ENCODE measurements at regions of chr12 and their contacts with region 1.

Region 1: DNA sequence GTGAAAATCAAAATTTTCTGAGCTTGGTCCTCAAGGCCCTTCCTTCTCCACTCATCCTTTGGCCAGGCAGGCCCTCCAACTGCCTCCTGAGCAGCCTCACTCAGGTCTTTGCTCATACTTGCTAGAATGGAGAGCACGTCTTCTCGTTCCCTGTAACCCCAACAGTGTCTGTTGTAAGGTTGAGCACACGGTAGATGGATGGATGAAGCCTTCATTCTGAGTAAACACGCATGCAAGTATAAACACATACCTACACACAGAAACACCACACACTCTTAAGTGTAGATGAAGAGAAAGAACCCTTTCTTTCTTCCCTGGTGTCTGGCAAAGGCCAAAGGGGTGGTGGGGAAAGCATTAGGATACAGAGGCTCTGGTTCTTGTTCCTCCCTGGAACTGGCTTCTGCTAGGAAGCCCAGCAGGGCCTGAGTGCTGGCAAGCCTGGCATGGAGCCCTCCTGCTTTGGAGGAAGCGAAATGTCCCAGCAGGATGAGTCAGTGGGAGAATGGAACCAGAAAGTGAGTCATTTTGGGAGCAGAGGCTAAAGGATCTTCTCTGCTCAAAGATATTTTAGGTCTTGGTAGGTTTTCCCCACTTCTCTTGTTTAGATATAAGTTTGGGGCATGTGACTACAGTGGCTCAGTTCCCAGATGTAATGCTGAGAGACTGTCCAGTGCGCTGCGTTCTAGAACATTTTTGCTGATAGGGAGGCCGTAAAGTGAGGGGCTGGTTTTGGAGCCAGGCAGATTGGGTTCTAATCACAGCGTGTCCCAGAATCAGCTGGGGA is 127.4 kb downstream of the CACNA1C start:
- DNase-seq: no peak
- H3K4me3 ChIP-seq: no peak overlapping the region
- H3K27ac ChIP-seq: no peak overlapping the region
- H3K4me1 ChIP-seq: peaks cover 21% of the 10 kb centered on the region
- CTCF ChIP-seq: no peak

Region 2: GRCh38 chr12:2084553-2085296 is 95.4 kb before region 1 on chr12:
- CTCF ChIA-PET with region 1: no interaction called
- POLR2A ChIA-PET with region 1: no interaction called
- intact Hi-C with region 1: no loop called
- DNase-seq: no peak
- H3K4me3 ChIP-seq: no peak overlapping the region
- H3K27ac ChIP-seq: no peak overlapping the region
- H3K4me1 ChIP-seq: no peaks in the 10 kb centered on the region
- CTCF ChIP-seq: no peak

Region 3: GRCh38 chr12:2360629-2361168 is 180.6 kb after region 1 on chr12:
- CTCF ChIA-PET with region 1: no interaction called
- POLR2A ChIA-PET with region 1: interaction called, 10 read pairs
- intact Hi-C with region 1: no loop called
- DNase-seq: no peak
- H3K4me3 ChIP-seq: no peak overlapping the region
- H3K27ac ChIP-seq: no peak overlapping the region
- H3K4me1 ChIP-seq: peaks cover under 1% of the 10 kb centered on the region
- CTCF ChIP-seq: peak; percentile 63

Measured in OCI-LY7 (cell line).